ENCODE measurements at regions of chr1 and their contacts with region 1.

Region 1: DNA sequence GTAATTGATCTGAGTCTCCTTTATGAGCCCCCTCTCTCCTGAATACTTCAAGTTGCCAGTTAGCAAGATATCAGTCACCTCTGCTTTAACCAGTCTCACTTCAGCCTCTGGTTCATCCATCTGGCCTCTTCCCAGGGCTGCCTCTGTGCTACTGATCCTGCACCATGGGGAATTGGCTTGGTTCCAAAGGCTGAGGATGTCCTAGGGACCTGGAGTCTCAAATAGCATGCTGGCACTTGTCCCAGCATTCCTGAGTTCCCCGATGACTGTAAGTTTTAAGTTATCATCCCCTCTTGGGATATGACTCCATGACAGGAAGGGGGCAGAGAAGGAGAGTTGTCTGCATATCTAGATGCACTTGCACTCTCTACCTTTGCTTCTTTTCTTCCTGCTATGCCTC is 252.0 kb downstream of the PTBP2 start:
- DNase-seq: no peak
- ATAC-seq: no peak
- H3K4me3 ChIP-seq: no peak overlapping the region
- H3K27ac ChIP-seq: no peak overlapping the region
- H3K4me1 ChIP-seq: no peaks in the 10 kb centered on the region
- H3K27me3 ChIP-seq: peaks cover 0 to 4% (median 0%) of the 10 kb centered on the region in 4 donors
- CTCF ChIP-seq: no peak

Region 2: GRCh38 chr1:96782856-96783255 is 190.7 kb before region 1 on chr1:
- intact Hi-C with region 1: no loop called
- DNase-seq: no peak
- ATAC-seq: no peak
- H3K4me3 ChIP-seq: no peak overlapping the region
- H3K27ac ChIP-seq: no peak overlapping the region
- H3K4me1 ChIP-seq: no peaks in the 10 kb centered on the region
- H3K27me3 ChIP-seq: no peaks in the 10 kb centered on the region
- CTCF ChIP-seq: no peak

Region 3: GRCh38 chr1:96927125-96927524 is 46.5 kb before region 1 on chr1:
- intact Hi-C with region 1: no loop called
- DNase-seq: no peak
- ATAC-seq: no peak
- H3K4me3 ChIP-seq: no peak overlapping the region
- H3K27ac ChIP-seq: no peak overlapping the region
- H3K4me1 ChIP-seq: no peaks in the 10 kb centered on the region
- H3K27me3 ChIP-seq: no peaks in the 10 kb centered on the region
- CTCF ChIP-seq: no peak

Region 4: DNA sequence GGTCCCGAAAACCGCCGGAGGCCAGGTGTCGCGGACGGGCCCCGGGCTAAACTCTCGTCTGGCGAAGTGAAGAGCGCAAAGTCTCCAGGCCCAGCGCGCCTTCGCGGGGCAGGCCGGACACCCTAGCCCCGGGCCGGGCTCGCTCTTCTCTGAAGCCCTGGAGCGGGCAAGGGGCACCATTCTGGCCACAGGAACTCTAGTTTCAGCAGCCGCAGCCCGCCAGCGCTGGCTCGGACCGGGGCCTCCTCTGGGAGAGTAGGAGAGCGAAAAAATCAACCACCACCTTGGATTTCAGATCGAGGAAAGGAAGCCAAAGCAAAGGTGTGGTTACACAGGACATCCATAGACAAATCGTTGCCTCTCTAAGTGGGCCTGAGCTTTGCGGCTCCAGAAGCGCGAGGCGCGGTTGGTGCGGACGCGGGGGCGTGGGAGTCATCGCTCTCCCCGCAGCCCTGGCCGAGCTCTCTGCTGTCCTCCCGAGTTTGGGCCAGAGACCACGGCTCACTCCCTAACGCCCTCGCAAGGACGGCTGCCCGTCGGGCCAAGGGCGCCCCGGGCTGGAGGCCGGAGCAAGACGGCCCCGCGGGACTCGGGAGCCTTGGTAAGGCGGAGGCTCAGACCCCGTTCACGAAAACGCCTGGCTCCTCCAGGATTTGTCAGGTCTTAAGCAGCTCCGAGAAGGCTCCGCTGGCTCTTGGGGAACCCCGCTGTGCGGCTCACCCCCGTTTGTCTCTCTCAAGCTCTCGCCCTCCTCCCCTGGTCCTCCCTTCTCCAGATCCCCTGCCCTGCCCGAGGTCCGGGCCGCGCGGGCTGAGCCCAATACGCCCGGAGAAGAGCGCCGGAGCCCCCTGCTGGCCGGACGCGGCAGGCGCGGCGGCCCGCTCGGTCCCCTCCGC is 1080.1 kb after region 1 on chr1:
- intact Hi-C with region 1: loop called (anchors 5 to 10 kb)
- DNase-seq: peak; percentile 23 to 90 (median 54)
- ATAC-seq: peak; percentile 96 to 98 (median 98)
- H3K4me3 ChIP-seq: peak overlapping the region; percentile 13 to 48 (median 32)
- H3K27ac ChIP-seq: no peak overlapping the region
- H3K4me1 ChIP-seq: peaks cover 0 to 8% (median 0%) of the 10 kb centered on the region in 3 donors
- H3K27me3 ChIP-seq: peaks cover 0 to 48% (median 11%) of the 10 kb centered on the region in 4 donors
- CTCF ChIP-seq: peak; percentile 84 to 99 (median 90)

Region 5: DNA sequence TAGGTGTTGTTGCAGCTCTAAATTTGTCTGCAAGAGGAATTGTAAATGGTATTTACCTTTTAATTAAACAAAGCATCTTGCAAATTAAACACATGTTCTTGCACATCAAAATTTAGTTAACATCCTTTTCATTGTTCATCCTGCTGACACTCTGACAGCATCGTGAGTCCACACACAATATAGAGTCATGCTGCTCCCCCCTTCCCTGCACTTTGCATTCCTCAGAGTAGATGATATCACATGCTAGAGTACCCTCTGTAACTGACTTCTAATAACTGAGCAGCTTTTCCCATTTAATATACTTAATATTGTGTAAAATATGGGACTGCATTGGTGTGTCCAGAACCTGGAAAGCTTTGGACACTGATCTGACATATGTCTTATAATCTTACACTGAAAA is 1086.0 kb after region 1 on chr1:
- intact Hi-C with region 1: loop called (anchors 5 to 10 kb)
- DNase-seq: no peak
- ATAC-seq: no peak
- H3K4me3 ChIP-seq: no peak overlapping the region
- H3K27ac ChIP-seq: no peak overlapping the region
- H3K4me1 ChIP-seq: no peaks in the 10 kb centered on the region
- H3K27me3 ChIP-seq: peaks cover 0 to 23% (median 0%) of the 10 kb centered on the region in 4 donors
- CTCF ChIP-seq: no peak

Measured in pancreas (tissue), 10 donors.